ENCODE measurements at regions of chr9 and their contacts with region 1.

Region 1: GRCh38 chr9:109926421-109926869 is 146.4 kb downstream of the PALM2AKAP2 start:
- DNase-seq: no peak
- H3K4me3 ChIP-seq: no peak overlapping the region
- H3K4me3 Mint-ChIP-seq: no peak overlapping the region
- H3K27ac Mint-ChIP-seq: no peak overlapping the region
- H3K4me1 ChIP-seq: no peaks in the 10 kb centered on the region
- H3K4me1 Mint-ChIP-seq: no peaks in the 10 kb centered on the region
- H3K27me3 ChIP-seq: no peaks in the 10 kb centered on the region
- H3K27me3 Mint-ChIP-seq: no peaks in the 10 kb centered on the region
- CTCF ChIP-seq: no peak

Region 2: DNA sequence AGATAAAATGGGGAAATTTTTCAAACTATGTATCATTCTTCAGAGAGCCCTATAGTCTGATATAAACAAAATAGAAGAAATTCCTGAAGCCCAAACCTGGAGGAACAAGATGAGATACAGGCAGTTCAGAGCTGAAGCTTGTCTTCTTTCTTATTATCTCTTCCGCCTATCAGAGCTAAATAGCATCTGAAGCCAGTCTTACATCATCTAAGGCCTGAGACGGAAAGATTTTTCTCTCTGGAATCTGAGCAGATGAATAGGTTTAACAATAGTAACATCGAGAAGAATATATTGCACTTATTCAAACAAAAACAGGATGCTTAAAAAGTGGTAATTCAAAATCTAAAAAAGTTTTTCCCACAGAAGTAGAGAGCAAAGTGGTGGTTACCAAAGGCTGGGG is 1052.1 kb after region 1 on chr9:
- CTCF ChIA-PET with region 1: interaction called, 10 read pairs
- POLR2A ChIA-PET with region 1: no interaction called
- intact Hi-C with region 1: no loop called
- DNase-seq: no peak
- H3K4me3 ChIP-seq: no peak overlapping the region
- H3K4me3 Mint-ChIP-seq: no peak overlapping the region
- H3K27ac Mint-ChIP-seq: peak overlapping the region; percentile 83
- H3K4me1 ChIP-seq: peaks cover 15% of the 10 kb centered on the region
- H3K4me1 Mint-ChIP-seq: peaks cover 54% of the 10 kb centered on the region
- H3K27me3 ChIP-seq: no peaks in the 10 kb centered on the region
- H3K27me3 Mint-ChIP-seq: no peaks in the 10 kb centered on the region
- CTCF ChIP-seq: no peak